CD4-positive, alpha-beta T cell (primary cell): ENCODE measurements at regions of chr1 and their contacts with region 1.

Region 1: DNA sequence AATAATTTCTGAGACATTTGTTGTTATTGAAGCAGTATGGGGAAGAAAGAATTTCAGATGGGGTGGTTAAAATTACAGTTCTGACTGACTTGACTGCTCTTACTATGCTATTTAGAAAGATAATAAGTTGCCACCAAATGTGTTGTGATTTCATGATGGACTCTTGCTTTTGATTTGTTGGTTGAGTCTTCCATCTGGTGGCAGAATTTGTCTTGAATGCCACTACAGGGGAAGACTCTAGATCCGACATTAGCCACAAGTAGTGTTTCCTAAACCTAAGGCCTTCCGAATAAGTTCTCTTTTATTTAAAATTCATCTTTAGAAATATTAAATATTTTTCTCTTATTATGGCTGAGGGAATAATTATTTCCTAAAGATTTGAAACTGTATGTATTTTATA is 190.9 kb upstream of the ADGRL4 start:
- DNase-seq: no peak
- ATAC-seq: no peak
- H3K4me3 ChIP-seq: no peak overlapping the region
- H3K4me3 Mint-ChIP-seq: no peak overlapping the region
- H3K27ac ChIP-seq: no peak overlapping the region
- H3K27ac Mint-ChIP-seq: no peak overlapping the region
- H3K4me1 ChIP-seq: no peaks in the 10 kb centered on the region
- H3K4me1 Mint-ChIP-seq: peaks cover 4% of the 10 kb centered on the region
- H3K27me3 ChIP-seq: no peaks in the 10 kb centered on the region
- H3K27me3 Mint-ChIP-seq: no peaks in the 10 kb centered on the region
- CTCF ChIP-seq: no peak

Region 2: DNA sequence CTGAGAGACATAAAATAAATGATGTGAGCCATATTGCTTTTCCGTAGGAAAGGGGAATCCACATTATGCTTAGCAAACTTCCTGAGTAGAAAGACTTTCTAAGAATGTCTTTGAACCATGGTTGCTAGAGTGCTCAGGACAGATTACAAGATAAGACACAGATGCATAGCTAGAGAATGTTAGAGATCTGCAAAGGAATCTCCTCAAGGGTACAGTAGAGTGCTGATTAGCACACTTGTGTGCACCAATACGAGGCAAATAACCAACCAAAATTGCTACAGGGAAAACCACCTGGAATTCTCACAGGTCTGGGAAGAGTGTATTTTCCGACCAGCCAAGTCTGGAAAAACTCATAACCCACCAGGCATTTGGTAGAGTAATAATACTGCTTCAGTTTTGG is 46.1 kb after region 1 on chr1:
- CTCF ChIA-PET with region 1: no interaction called
- POLR2A ChIA-PET with region 1: no interaction called
- intact Hi-C with region 1: loop called in 1 of 2 experiments (anchors 5 kb)
- DNase-seq: no peak
- ATAC-seq: no peak
- H3K4me3 ChIP-seq: no peak overlapping the region
- H3K4me3 Mint-ChIP-seq: no peak overlapping the region
- H3K27ac ChIP-seq: no peak overlapping the region
- H3K27ac Mint-ChIP-seq: no peak overlapping the region
- H3K4me1 ChIP-seq: no peaks in the 10 kb centered on the region
- H3K4me1 Mint-ChIP-seq: no peaks in the 10 kb centered on the region
- H3K27me3 ChIP-seq: no peaks in the 10 kb centered on the region
- H3K27me3 Mint-ChIP-seq: no peaks in the 10 kb centered on the region
- CTCF ChIP-seq: no peak